Activated CD8-positive, alpha-beta T cell treated with anti-CD3 and anti-CD28 coated beads, Interleukin-2, amount 10 ng/mL, durations not matched to agents 7 days and 5 days (primary cell): ENCODE measurements at regions of chr14 and their contacts with region 1.

Region 1: GRCh38 chr14:91996948-91997371 is 42.9 kb downstream of the TRIP11 start:
- DNase-seq: no peak
- ATAC-seq: peak; percentile 60
- H3K4me3 Mint-ChIP-seq: no peak overlapping the region
- H3K27ac Mint-ChIP-seq: no peak overlapping the region
- H3K4me1 Mint-ChIP-seq: peaks cover 39% of the 10 kb centered on the region
- H3K27me3 Mint-ChIP-seq: no peaks in the 10 kb centered on the region

Region 2: GRCh38 chr14:91866061-91866460 is 130.9 kb before region 1 on chr14:
- CTCF ChIA-PET with region 1: interaction called, 11 read pairs
- POLR2A ChIA-PET with region 1: no interaction called
- DNase-seq: peak; percentile 67
- ATAC-seq: peak; percentile 6
- H3K4me3 Mint-ChIP-seq: peak overlapping the region; percentile 94
- H3K27ac Mint-ChIP-seq: peak overlapping the region; percentile 96
- H3K4me1 Mint-ChIP-seq: peaks cover 91% of the 10 kb centered on the region
- H3K27me3 Mint-ChIP-seq: no peaks in the 10 kb centered on the region

Region 3: GRCh38 chr14:91911474-91912032 is 85.4 kb before region 1 on chr14:
- CTCF ChIA-PET with region 1: interaction called, 17 read pairs
- POLR2A ChIA-PET with region 1: no interaction called
- DNase-seq: peak; percentile 62
- ATAC-seq: peak; percentile 76
- H3K4me3 Mint-ChIP-seq: no peak overlapping the region
- H3K27ac Mint-ChIP-seq: peak overlapping the region; percentile 27
- H3K4me1 Mint-ChIP-seq: peaks cover 22% of the 10 kb centered on the region
- H3K27me3 Mint-ChIP-seq: peaks cover 3% of the 10 kb centered on the region

Region 4: GRCh38 chr14:91985521-91986255 is 11.3 kb before region 1 on chr14:
- CTCF ChIA-PET with region 1: interaction called, 37 read pairs
- POLR2A ChIA-PET with region 1: no interaction called
- DNase-seq: no peak
- ATAC-seq: no peak
- H3K4me3 Mint-ChIP-seq: no peak overlapping the region
- H3K27ac Mint-ChIP-seq: no peak overlapping the region
- H3K4me1 Mint-ChIP-seq: no peaks in the 10 kb centered on the region
- H3K27me3 Mint-ChIP-seq: no peaks in the 10 kb centered on the region

Region 5: DNA sequence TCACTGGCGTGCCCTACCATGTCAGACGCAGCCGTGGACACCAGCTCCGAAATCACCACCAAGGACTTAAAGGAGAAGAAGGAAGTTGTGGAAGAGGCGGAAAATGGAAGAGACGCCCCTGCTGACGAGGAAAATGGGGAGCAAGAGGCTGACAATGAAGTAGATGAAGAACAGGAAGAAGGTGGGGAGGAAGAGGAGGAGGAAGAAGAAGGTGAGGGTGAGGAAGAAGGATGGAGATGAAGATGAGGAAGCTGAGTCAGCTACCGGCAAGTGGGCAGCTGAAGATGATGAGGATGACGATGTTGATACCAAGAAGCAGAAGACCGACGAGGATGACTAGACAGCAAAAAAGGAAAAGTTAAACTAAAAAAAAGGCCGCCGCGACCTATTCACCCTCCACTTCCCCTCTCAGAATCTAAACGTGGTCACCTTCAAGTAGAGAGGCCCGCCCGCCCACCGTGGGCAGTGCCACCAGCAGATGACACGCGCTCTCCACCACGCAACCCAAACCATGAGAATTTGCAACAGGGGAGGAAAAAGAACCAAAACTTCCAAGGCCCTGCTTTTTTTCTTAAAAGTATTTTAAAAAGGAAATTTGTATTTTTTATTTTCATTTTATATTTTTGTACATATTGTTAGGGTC is 29.7 kb after region 1 on chr14:
- CTCF ChIA-PET with region 1: interaction called, 14 read pairs
- POLR2A ChIA-PET with region 1: no interaction called
- DNase-seq: no peak
- ATAC-seq: no peak
- H3K4me3 Mint-ChIP-seq: no peak overlapping the region
- H3K27ac Mint-ChIP-seq: no peak overlapping the region
- H3K4me1 Mint-ChIP-seq: peaks cover 11% of the 10 kb centered on the region
- H3K27me3 Mint-ChIP-seq: no peaks in the 10 kb centered on the region

Region 6: GRCh38 chr14:92074555-92074954 is 77.6 kb after region 1 on chr14:
- CTCF ChIA-PET with region 1: no interaction called
- POLR2A ChIA-PET with region 1: no interaction called
- DNase-seq: no peak
- ATAC-seq: no peak
- H3K4me3 Mint-ChIP-seq: no peak overlapping the region
- H3K27ac Mint-ChIP-seq: peak overlapping the region; percentile 30
- H3K4me1 Mint-ChIP-seq: peaks cover 8% of the 10 kb centered on the region
- H3K27me3 Mint-ChIP-seq: no peaks in the 10 kb centered on the region

Region 7: GRCh38 chr14:92160619-92161018 is 163.7 kb after region 1 on chr14:
- CTCF ChIA-PET with region 1: no interaction called
- POLR2A ChIA-PET with region 1: no interaction called
- DNase-seq: no peak
- ATAC-seq: no peak
- H3K4me3 Mint-ChIP-seq: no peak overlapping the region
- H3K27ac Mint-ChIP-seq: no peak overlapping the region
- H3K4me1 Mint-ChIP-seq: peaks cover 8% of the 10 kb centered on the region
- H3K27me3 Mint-ChIP-seq: no peaks in the 10 kb centered on the region